ENCODE measurements at regions of chr15 and their contacts with region 1.

Region 1: GRCh38 chr15:38610748-38611147 is 46.1 kb upstream of the RASGRP1 start:
- DNase-seq: peak; percentile 49
- H3K4me3 Mint-ChIP-seq: peak overlapping the region; percentile 73
- H3K27ac Mint-ChIP-seq: peak overlapping the region; percentile 98
- H3K4me1 Mint-ChIP-seq: peaks cover 78% of the 10 kb centered on the region
- H3K27me3 Mint-ChIP-seq: no peaks in the 10 kb centered on the region

Region 2: GRCh38 chr15:38486936-38487335 is 123.8 kb before region 1 on chr15:
- intact Hi-C with region 1: loop called (anchors 2 kb)
- DNase-seq: no peak
- H3K4me3 Mint-ChIP-seq: peak overlapping the region; percentile 17
- H3K27ac Mint-ChIP-seq: peak overlapping the region; percentile 90
- H3K4me1 Mint-ChIP-seq: peaks cover 47% of the 10 kb centered on the region
- H3K27me3 Mint-ChIP-seq: no peaks in the 10 kb centered on the region

Region 3: GRCh38 chr15:38576837-38577236 is 33.9 kb before region 1 on chr15:
- intact Hi-C with region 1: no loop called
- DNase-seq: no peak
- H3K4me3 Mint-ChIP-seq: no peak overlapping the region
- H3K27ac Mint-ChIP-seq: no peak overlapping the region
- H3K4me1 Mint-ChIP-seq: peaks cover 14% of the 10 kb centered on the region
- H3K27me3 Mint-ChIP-seq: peaks cover 3% of the 10 kb centered on the region

Region 4: DNA sequence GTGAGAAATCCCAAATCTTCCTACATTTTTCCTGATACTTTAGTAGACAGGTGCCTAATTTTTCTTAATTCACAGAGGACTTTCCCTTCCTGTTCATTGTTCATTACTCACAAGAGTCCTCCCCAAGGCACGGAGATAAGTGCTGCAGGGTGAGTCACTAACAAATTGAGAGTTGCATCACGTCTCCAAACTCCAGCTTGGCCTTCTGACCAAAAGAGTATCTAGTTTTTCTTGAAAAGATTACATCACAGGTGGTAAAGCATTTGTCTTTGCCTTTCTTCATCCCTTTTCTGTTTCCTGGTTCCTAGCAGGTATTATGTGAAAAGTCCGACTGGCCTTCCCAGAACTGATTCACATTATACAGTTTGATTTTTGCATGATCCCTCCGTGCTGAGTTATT is 21.2 kb before region 1 on chr15:
- intact Hi-C with region 1: loop called (anchors 2 kb)
- DNase-seq: no peak
- H3K4me3 Mint-ChIP-seq: no peak overlapping the region
- H3K27ac Mint-ChIP-seq: no peak overlapping the region
- H3K4me1 Mint-ChIP-seq: peaks cover 33% of the 10 kb centered on the region
- H3K27me3 Mint-ChIP-seq: no peaks in the 10 kb centered on the region

Region 5: DNA sequence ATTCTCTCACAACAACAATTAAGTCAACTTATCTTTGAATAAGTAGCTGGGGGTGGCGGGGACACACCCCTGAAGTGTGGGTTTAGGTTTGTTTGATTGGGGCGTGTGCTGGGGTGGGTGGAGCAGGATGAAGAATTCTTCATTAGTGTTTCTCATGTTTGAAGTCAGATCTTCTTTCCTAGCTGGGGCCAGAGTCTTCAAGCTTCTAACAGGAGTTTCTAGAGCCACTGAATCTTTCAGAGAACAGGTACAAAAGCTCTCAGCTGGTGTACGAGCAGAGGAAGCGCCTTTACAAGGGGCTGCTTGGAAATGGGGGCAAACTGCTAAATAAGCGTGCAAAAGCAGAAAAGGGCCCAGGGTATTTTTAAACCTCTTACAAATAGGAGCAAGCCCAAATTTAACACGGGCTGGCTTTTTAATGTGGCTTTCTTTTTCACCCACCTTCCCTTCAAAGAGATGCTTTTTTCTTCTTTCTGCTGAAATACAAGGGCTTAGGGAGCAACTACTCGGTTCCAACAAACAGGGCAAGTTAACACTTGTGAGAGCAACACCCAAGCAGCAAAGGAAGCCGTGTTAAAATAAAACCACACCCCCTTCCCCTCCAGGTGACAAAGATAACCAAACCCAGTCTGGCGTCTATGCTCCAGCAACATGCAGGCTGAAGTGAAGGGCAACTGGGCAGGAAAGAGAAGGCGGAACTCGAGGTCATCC is 40.7 kb after region 1 on chr15:
- intact Hi-C with region 1: loop called (anchors 1 kb)
- DNase-seq: peak; percentile 57
- H3K4me3 Mint-ChIP-seq: peak overlapping the region; percentile 79
- H3K27ac Mint-ChIP-seq: peak overlapping the region; percentile 94
- H3K4me1 Mint-ChIP-seq: peaks cover 93% of the 10 kb centered on the region
- H3K27me3 Mint-ChIP-seq: no peaks in the 10 kb centered on the region

Region 6: GRCh38 chr15:38683382-38684242 is 72.9 kb after region 1 on chr15:
- intact Hi-C with region 1: loop called (anchors 1 kb)
- DNase-seq: peak; percentile 57
- H3K4me3 Mint-ChIP-seq: peak overlapping the region; percentile 65
- H3K27ac Mint-ChIP-seq: peak overlapping the region; percentile 95
- H3K4me1 Mint-ChIP-seq: peaks cover 80% of the 10 kb centered on the region
- H3K27me3 Mint-ChIP-seq: no peaks in the 10 kb centered on the region

Region 7: DNA sequence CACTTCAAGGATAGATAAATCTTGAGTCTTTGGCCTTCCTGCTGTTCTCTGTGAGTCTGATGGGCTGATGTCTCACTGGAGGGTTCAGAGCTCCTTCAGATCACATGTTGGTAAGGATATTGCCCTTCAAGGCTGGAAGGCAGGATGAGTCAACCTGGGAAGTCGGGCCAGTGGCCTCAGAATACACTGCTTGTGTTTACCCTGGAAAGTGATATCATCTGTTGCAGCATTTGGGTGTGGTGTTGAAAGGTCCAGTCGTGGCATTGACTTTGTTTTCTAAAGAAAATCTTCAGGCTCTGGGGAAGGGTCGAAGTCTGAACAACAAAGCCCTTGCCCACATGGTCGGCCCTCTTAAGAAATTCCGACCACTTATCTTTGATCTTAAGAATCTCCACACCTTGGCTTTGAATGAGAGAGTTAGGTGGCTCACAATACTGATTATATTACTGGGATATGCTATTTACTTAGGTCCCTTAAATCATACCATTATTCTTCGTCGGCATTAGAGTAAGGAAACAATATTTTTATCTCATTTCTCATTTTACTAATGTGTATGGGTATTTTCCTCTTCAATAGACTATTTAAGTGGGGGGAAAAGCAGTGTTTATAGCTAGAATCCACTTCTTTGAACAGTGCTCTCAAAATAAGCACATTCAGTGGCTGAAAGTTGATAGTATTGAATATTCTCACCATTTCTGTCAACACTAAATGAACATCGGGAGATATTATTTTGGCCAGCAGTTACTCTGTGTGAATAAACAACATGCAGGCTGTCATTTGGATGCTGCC is 257.8 kb after region 1 on chr15:
- intact Hi-C with region 1: no loop called
- DNase-seq: no peak
- H3K4me3 Mint-ChIP-seq: no peak overlapping the region
- H3K27ac Mint-ChIP-seq: no peak overlapping the region
- H3K4me1 Mint-ChIP-seq: no peaks in the 10 kb centered on the region
- H3K27me3 Mint-ChIP-seq: peaks cover 8% of the 10 kb centered on the region